HCT116 (cell line): ENCODE measurements at regions of chr3 and their contacts with region 1.

Region 1: GRCh38 chr3:160027541-160028195 is 39.0 kb downstream of the IL12A start:
- DNase-seq: no peak
- ATAC-seq: 0 out of 2 replicates have a peak, but pooled peaks have one; percentile 15
- H3K4me3 ChIP-seq: no peak overlapping the region
- H3K27ac ChIP-seq: no peak overlapping the region
- H3K4me1 ChIP-seq: peaks cover 0 to 14% of the 10 kb centered on the region in 2 experiments; a peak in 2 of 4 replicates
- H3K27me3 ChIP-seq: no peaks in the 10 kb centered on the region
- CTCF ChIP-seq: no peak
- POLR2A ChIP-seq: no peak
- RAD21 ChIP-seq: no peak

Region 2: DNA sequence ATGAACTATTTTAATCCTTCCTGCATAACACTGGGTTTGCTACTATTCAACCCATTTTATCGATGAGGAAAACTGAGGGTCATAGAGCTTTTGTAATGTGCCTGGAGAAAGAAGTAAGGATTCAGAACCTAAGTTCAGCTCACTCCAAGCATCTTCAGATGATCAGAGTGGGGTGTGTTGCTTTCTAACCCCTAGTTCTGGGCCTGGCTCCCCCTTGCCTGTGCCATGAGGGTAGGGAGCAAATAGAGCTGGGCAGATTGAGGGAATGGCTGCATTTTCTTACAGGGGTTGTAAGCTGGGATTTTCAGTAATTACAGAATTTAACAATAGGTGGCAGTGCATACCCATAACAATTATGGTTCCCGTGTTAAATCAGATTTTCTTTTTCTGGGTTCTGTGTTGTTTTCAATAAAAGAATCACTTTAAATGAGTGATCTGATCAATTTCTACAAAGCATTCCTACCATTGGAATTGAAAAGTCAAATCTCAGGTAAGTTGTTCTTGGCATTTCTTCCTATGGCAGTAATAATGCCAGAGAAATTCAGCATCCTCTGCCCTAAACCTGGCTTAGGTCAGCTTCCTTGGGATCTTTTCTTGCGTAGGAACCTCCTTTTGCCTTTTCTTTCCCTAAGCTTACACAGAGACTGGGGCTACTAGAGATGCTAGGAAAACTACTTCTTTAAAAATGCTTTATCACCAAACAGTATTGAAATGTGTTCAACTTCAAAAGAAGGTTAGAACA is 142.8 kb before region 1 on chr3:
- CTCF ChIA-PET with region 1: interaction called, 10 read pairs
- POLR2A ChIA-PET with region 1: no interaction called
- RAD21 ChIA-PET with region 1: no interaction called
- intact Hi-C with region 1: no loop called
- DNase-seq: no peak
- ATAC-seq: peak; percentile 86
- H3K4me3 ChIP-seq: no peak overlapping the region
- H3K27ac ChIP-seq: no peak overlapping the region
- H3K4me1 ChIP-seq: peaks cover 0 to 9% of the 10 kb centered on the region in 2 experiments; a peak in 2 of 4 replicates
- H3K27me3 ChIP-seq: no peaks in the 10 kb centered on the region
- CTCF ChIP-seq: peak; percentile 46 to 62 (median 59); a peak in 5 of 6 replicates
- POLR2A ChIP-seq: no peak
- RAD21 ChIP-seq: peak; percentile 73

Region 3: DNA sequence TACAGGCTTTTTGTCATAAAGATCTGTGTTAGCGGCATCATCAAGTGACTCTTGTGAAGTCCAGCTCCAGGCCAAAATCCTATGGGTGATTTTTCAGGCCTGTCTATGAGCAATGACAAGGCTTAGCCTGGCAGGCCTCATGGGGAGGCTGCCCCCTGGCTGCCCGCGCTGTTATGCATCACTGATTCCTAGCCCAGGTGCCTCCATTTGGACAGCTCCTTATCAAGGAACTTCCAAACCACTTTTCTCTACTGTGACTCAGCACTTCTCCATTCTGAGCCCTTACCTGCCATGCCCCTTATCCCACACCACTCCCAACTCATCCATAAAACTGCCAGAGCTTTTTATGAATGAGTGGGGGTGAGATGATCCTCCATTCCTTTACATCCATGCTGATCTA is 106.1 kb after region 1 on chr3:
- CTCF ChIA-PET with region 1: interaction called, 17 read pairs
- POLR2A ChIA-PET with region 1: interaction called, 3 read pairs
- RAD21 ChIA-PET with region 1: interaction called in 1 of 2 experiments, 5 read pairs
- intact Hi-C with region 1: loop called (anchors 1 kb)
- DNase-seq: peak; percentile 40
- ATAC-seq: peak; percentile 78
- H3K4me3 ChIP-seq: no peak overlapping the region
- H3K27ac ChIP-seq: no peak overlapping the region
- H3K4me1 ChIP-seq: peaks cover 11 to 31% of the 10 kb centered on the region in 2 experiments; a peak in 3 of 4 replicates
- H3K27me3 ChIP-seq: no peaks in the 10 kb centered on the region
- CTCF ChIP-seq: peak; percentile 43 to 72 (median 55); a peak in 5 of 6 replicates
- POLR2A ChIP-seq: no peak
- RAD21 ChIP-seq: peak; percentile 64

Region 4: GRCh38 chr3:160217675-160218074 is 190.0 kb after region 1 on chr3:
- CTCF ChIA-PET with region 1: no interaction called
- POLR2A ChIA-PET with region 1: no interaction called
- RAD21 ChIA-PET with region 1: no interaction called
- intact Hi-C with region 1: no loop called
- DNase-seq: no peak
- ATAC-seq: no peak
- H3K4me3 ChIP-seq: no peak overlapping the region
- H3K27ac ChIP-seq: no peak overlapping the region
- H3K4me1 ChIP-seq: no peaks in the 10 kb centered on the region
- H3K27me3 ChIP-seq: no peaks in the 10 kb centered on the region
- CTCF ChIP-seq: no peak
- POLR2A ChIP-seq: no peak
- RAD21 ChIP-seq: no peak

Region 5: GRCh38 chr3:160343132-160343531 is 315.5 kb after region 1 on chr3:
- CTCF ChIA-PET with region 1: interaction called, 7 read pairs
- POLR2A ChIA-PET with region 1: no interaction called
- RAD21 ChIA-PET with region 1: interaction called in 1 of 2 experiments, 4 read pairs
- intact Hi-C with region 1: loop called (anchors 1 kb)
- DNase-seq: no peak
- ATAC-seq: no peak
- H3K4me3 ChIP-seq: no peak overlapping the region
- H3K27ac ChIP-seq: no peak overlapping the region
- H3K4me1 ChIP-seq: no peaks in the 10 kb centered on the region
- H3K27me3 ChIP-seq: no peaks in the 10 kb centered on the region
- CTCF ChIP-seq: peak; percentile 34 to 63 (median 45); a peak in 3 of 6 replicates
- POLR2A ChIP-seq: no peak
- RAD21 ChIP-seq: peak; percentile 67

Region 6: DNA sequence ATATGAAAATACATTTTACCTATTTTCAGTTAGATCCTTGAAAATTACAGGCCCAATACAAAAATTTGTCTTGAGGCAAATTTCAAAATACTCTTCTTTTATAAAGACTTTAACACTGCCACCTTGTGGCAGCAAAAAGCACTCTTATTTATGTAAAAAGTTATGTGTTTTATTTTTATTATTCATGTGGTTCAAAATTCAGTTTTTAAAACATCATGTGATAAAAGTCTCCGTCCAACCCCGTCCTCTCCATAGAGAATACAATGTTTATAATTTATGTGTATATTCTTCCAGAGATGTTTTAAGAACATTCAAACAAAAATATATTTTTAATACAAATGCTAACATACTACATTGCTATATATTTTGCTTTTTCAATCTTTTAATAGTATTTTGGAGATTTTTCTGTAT is 458.8 kb after region 1 on chr3:
- CTCF ChIA-PET with region 1: no interaction called
- POLR2A ChIA-PET with region 1: no interaction called
- RAD21 ChIA-PET with region 1: no interaction called
- intact Hi-C with region 1: loop called (anchors 5 kb)
- DNase-seq: peak; percentile 18
- ATAC-seq: no peak
- H3K4me3 ChIP-seq: no peak overlapping the region
- H3K27ac ChIP-seq: no peak overlapping the region
- H3K4me1 ChIP-seq: no peaks in the 10 kb centered on the region
- H3K27me3 ChIP-seq: no peaks in the 10 kb centered on the region
- CTCF ChIP-seq: peak; percentile 42 to 66 (median 48); a peak in 5 of 6 replicates
- POLR2A ChIP-seq: no peak
- RAD21 ChIP-seq: peak; percentile 61